Head of caudate nucleus (tissue), 42 donors: ENCODE measurements at regions of chr7 and their contacts with region 1.

Region 1: GRCh38 chr7:129367700-129368388 is 66.4 kb upstream of the STRIP2 start:
- DNase-seq: peak; percentile 59 to 92 (median 84)

Region 2: GRCh38 chr7:129635300-129636029 is 267.6 kb after region 1 on chr7:
- intact Hi-C with region 1: loop called (anchors 10 kb)
- DNase-seq: peak; percentile 47 to 91 (median 75)